ENCODE measurements at regions of chr10 and their contacts with region 1.

Region 1: GRCh38 chr10:5873515-5873995 is 16.1 kb downstream of the ANKRD16 start:
- DNase-seq: peak; percentile 56 to 82
- ATAC-seq: peak; percentile 89 to 100 (median 99)
- H3K4me3 ChIP-seq: no peak overlapping the region
- H3K4me3 Mint-ChIP-seq: peak overlapping the region; percentile 79
- H3K27ac ChIP-seq: peak overlapping the region; percentile 61
- H3K27ac Mint-ChIP-seq: peak overlapping the region in 1 of 2 donors; percentile 25
- H3K4me1 ChIP-seq: no peaks in the 10 kb centered on the region
- H3K4me1 Mint-ChIP-seq: peaks cover 7 to 8% of the 10 kb centered on the region in 2 donors
- H3K27me3 ChIP-seq: no peaks in the 10 kb centered on the region
- H3K27me3 Mint-ChIP-seq: no peaks in the 10 kb centered on the region
- CTCF ChIP-seq: peak; percentile 76

Region 2: DNA sequence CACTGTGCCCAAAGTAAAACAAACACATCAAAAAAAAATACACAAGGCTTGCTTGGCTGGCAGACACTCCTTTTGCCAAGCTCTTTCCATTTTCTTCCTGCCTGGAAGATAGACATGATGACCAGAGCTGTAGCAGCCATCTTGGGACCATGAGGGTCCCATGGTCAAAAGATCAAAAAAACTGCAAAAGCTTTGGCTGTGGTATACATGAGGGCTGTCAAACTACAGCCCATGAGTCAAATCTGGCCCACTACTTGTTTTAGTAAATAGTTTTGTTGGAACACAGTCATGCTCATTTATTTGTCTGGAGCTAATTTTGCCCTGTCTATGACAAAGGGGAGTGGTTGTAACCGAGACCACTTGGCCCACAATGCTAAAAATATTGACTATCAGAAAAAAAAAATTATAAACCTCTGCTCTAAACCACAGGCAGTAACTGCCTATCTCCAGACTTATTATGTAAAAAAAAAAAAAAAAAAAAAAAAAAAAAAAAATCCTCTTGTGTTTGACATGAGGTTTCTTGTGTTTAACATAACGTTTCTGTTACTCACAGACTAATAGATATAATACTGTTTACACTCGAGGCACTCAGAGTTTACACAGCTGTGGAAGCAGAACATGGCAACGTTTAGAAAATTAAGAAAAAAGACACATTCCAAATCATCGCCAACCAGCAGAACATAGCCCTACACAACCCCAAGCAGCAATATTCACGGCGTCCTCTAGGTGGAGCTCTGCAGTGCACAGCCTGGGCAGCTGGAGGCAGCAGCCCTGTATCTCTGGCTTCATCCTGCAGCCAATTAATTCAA is 244.0 kb before region 1 on chr10:
- intact Hi-C with region 1: loop called (anchors 1 kb)
- DNase-seq: peak; percentile 73 to 92
- ATAC-seq: peak; percentile 93 to 99 (median 99)
- H3K4me3 ChIP-seq: no peak overlapping the region
- H3K4me3 Mint-ChIP-seq: no peak overlapping the region
- H3K27ac ChIP-seq: no peak overlapping the region
- H3K27ac Mint-ChIP-seq: no peak overlapping the region
- H3K4me1 ChIP-seq: no peaks in the 10 kb centered on the region
- H3K4me1 Mint-ChIP-seq: peaks cover 4 to 10% of the 10 kb centered on the region in 2 donors
- H3K27me3 ChIP-seq: peaks cover 5% of the 10 kb centered on the region
- H3K27me3 Mint-ChIP-seq: peaks cover 8 to 15% of the 10 kb centered on the region in 2 donors
- CTCF ChIP-seq: peak; percentile 93

Region 3: GRCh38 chr10:5684318-5684970 is 189.1 kb before region 1 on chr10 and contains the start of gene TASOR2:
- intact Hi-C with region 1: loop called (anchors 1 kb)
- DNase-seq: peak; percentile 92 to 98
- ATAC-seq: peak; percentile 80 to 91 (median 86)
- H3K4me3 ChIP-seq: peak within 1 kb of the TSS; percentile 53
- H3K4me3 Mint-ChIP-seq: peak within 1 kb of the TSS; percentile 97
- H3K27ac ChIP-seq: peak within 1 kb of the TSS; percentile 82
- H3K27ac Mint-ChIP-seq: peak within 1 kb of the TSS; percentile 95 to 99
- H3K4me1 ChIP-seq: peaks cover 6% of the 10 kb centered on the region
- H3K4me1 Mint-ChIP-seq: peaks cover 33 to 36% of the 10 kb centered on the region in 2 donors
- H3K27me3 ChIP-seq: no peaks in the 10 kb centered on the region
- H3K27me3 Mint-ChIP-seq: peaks cover under 1 to 12% of the 10 kb centered on the region in 2 donors
- CTCF ChIP-seq: no peak
- total RNA-seq, gene TASOR2: 64.4 to 88.7 (median 66.4) TPM

Region 4: GRCh38 chr10:6348096-6348874 is 474.7 kb after region 1 on chr10:
- intact Hi-C with region 1: no loop called
- DNase-seq: peak; percentile 55 to 95
- ATAC-seq: peak; percentile 88 to 92 (median 90)
- H3K4me3 ChIP-seq: no peak overlapping the region
- H3K4me3 Mint-ChIP-seq: peak overlapping the region; percentile 84
- H3K27ac ChIP-seq: peak overlapping the region; percentile 78
- H3K27ac Mint-ChIP-seq: peak overlapping the region; percentile 92 to 93
- H3K4me1 ChIP-seq: peaks cover 23% of the 10 kb centered on the region
- H3K4me1 Mint-ChIP-seq: peaks cover 27 to 32% of the 10 kb centered on the region in 2 donors
- H3K27me3 ChIP-seq: no peaks in the 10 kb centered on the region
- H3K27me3 Mint-ChIP-seq: no peaks in the 10 kb centered on the region
- CTCF ChIP-seq: no peak

Measured in natural killer cell (primary cell).